Activated CD8-positive, alpha-beta T cell treated with anti-CD3 and anti-CD28 coated beads for 36 hours (primary cell): ENCODE measurements at regions of chr17 and their contacts with region 1.

Region 1: DNA sequence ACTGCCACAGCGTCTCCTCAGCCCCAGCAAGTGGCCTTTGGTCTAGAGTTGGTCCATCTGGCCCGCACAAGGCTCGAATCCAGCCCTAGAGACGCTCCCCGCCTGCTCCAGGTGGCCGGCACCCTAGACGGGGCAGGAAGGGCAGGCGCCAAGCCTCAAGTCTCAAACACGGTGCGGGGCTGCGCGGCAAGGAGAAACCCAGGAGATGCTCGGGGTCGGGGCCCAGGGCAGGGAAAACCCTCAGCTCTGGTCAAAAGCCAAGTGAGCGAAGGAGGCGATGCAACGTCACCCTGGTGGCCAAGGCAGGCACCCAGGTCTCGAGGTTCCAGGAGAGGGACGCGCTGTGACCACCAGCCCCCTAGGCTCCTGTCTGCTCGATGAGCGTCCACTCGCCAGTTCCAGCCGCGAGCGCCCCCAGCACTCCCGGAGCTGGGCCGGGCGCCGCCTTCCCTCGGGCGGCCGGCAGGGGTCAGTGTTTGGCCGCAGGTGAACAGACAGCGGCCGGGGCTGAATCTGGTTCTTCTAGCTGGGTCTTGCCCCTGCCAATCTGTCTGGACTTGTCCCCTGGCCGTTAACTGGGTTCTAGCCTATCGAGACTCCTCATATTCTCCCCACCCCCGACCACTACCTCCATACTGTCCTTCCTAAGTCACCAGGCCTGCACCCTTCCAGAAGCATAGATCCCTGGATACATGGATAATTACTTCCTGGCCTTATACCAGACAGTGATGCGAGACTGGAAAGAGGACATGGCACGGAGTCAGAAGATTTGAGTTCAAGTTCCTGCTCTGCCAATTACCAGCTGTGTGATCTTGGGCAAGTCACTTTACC is 44.0 kb downstream of the PRAC1 start:
- DNase-seq: peak; percentile 79
- ATAC-seq: peak; percentile 97
- H3K4me3 Mint-ChIP-seq: no peak overlapping the region
- H3K27ac Mint-ChIP-seq: no peak overlapping the region
- H3K4me1 Mint-ChIP-seq: peaks cover 2% of the 10 kb centered on the region
- H3K27me3 Mint-ChIP-seq: peaks cover 17% of the 10 kb centered on the region
- CTCF ChIP-seq: peak; percentile 92

Region 2: DNA sequence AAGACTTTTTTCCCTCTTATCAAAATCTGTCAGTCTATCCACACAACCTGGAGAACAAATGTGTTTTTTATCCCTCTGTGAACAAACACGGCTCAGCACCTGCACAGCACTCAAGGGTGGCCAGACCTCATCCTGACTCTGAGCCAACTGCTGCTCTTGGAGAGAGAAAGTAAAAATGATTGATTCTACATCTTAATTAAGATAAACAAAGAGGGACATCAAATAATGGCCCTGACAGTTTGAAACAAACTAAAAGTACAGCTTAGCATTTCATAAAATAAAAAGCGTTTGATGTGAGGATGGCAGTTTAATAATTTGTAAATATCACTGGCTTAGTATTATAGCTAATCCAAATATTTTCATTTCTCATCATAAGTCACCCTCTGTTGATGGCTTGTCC is 464.6 kb before region 1 on chr17:
- CTCF ChIA-PET with region 1: no interaction called
- POLR2A ChIA-PET with region 1: no interaction called
- intact Hi-C with region 1: no loop called
- DNase-seq: no peak
- ATAC-seq: no peak
- H3K4me3 Mint-ChIP-seq: no peak overlapping the region
- H3K27ac Mint-ChIP-seq: peak overlapping the region; percentile 31
- H3K4me1 Mint-ChIP-seq: peaks cover 8% of the 10 kb centered on the region
- H3K27me3 Mint-ChIP-seq: no peaks in the 10 kb centered on the region
- CTCF ChIP-seq: no peak

Region 3: DNA sequence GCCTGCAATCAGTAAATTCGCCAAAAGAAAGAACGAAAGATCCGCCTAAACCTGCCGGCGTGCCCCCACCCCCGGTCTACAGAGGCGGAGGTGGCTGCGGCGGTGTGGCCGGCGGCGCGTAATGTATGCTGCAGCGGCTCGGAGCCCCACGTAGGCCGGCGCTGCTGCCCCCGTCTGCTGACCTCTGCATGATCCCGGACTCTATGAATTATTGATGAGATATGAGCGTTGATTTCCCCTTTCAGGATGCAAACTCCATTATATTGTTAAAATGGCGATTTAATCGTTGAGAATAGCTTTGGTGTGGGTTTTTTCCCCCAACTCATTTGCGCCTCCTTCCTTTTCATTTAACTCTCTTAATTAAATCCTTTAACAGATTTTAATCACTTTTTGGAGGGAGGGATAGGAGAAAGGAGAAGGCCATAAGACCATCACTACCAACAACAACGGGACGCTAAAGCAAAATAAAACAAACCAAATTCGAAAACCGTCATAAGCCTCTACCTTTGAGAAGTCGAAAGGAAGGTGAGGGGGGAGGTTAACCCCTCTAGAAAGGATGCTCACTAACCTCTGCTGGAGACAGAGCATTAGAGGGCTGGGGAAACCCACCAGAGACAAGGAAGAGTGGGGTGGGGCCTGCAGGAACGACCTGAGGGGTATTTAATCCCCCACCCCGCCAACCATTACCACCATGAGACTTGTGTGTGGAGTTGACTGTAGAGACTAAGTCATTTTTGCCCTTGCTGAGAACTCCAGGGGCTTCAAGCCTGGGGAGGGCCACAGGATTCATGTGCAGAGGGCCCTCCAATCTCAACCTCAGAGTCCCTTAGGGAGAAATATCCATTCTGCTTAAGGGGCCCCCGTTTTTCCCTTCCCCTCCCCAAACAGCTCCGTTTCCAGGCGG is 91.7 kb before region 1 on chr17:
- CTCF ChIA-PET with region 1: no interaction called
- POLR2A ChIA-PET with region 1: no interaction called
- intact Hi-C with region 1: no loop called
- DNase-seq: peak; percentile 73
- ATAC-seq: peak; percentile 32
- H3K4me3 Mint-ChIP-seq: peak overlapping the region; percentile 89
- H3K27ac Mint-ChIP-seq: no peak overlapping the region
- H3K4me1 Mint-ChIP-seq: peaks cover 27% of the 10 kb centered on the region
- H3K27me3 Mint-ChIP-seq: peaks cover 89% of the 10 kb centered on the region
- CTCF ChIP-seq: no peak

Region 4: GRCh38 chr17:48690655-48691054 is 12.3 kb after region 1 on chr17:
- CTCF ChIA-PET with region 1: interaction called, 25 read pairs
- POLR2A ChIA-PET with region 1: interaction called, 3 read pairs
- intact Hi-C with region 1: no loop called
- DNase-seq: no peak
- ATAC-seq: no peak
- H3K4me3 Mint-ChIP-seq: no peak overlapping the region
- H3K27ac Mint-ChIP-seq: no peak overlapping the region
- H3K4me1 Mint-ChIP-seq: no peaks in the 10 kb centered on the region
- H3K27me3 Mint-ChIP-seq: peaks cover 7% of the 10 kb centered on the region
- CTCF ChIP-seq: no peak

Region 5: GRCh38 chr17:48724251-48725003 is 46.1 kb after region 1 on chr17:
- CTCF ChIA-PET with region 1: interaction called, 44 read pairs
- POLR2A ChIA-PET with region 1: no interaction called
- intact Hi-C with region 1: no loop called
- DNase-seq: peak; percentile 91
- ATAC-seq: peak; percentile 70
- H3K4me3 Mint-ChIP-seq: peak overlapping the region; percentile 40
- H3K27ac Mint-ChIP-seq: no peak overlapping the region
- H3K4me1 Mint-ChIP-seq: peaks cover 29% of the 10 kb centered on the region
- H3K27me3 Mint-ChIP-seq: peaks cover 88% of the 10 kb centered on the region
- CTCF ChIP-seq: peak; percentile 80

Region 6: DNA sequence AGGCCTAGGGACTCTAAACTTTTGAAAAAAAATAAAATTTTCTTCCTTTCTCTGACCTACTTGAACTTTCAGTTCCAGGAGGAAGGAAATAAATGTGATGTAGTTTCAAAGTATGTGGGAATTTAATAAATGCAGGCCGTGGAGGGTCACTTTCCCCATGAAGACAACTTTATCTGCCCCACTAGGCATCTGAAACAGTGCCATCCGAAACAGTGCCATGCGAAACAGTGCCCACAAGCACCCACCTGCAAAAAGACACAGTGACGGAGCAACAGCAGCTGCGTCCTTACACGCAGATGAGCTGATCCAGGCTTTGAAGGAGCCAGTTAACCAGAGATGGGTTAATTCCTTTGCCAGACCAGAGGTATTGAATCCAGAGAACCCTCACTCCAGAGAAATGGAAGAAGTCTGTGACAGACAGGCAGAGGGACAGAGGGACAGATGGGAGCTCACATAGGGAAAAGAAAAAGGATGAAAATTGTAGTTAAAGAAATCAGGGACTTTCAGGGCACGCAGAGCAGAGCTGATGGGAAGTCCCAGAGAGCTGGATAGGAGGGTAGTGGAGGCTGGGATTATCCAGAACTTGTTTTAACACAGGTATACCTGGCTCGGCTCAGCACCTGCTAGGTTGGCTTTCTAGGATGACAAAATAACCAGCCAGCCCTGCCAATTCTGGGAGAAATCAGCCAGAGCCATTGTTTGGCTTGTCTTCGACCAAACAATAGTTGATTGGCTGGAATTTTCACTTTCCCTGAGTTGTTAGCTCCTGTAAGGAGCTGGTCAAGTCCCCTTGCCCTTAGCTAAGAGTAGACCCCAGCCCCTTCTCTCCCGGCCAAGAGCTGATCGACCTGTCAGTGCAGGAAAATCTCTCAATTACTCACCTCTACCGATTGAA is 67.3 kb after region 1 on chr17:
- CTCF ChIA-PET with region 1: interaction called, 12 read pairs
- POLR2A ChIA-PET with region 1: no interaction called
- intact Hi-C with region 1: no loop called
- DNase-seq: no peak
- ATAC-seq: no peak
- H3K4me3 Mint-ChIP-seq: no peak overlapping the region
- H3K27ac Mint-ChIP-seq: no peak overlapping the region
- H3K4me1 Mint-ChIP-seq: no peaks in the 10 kb centered on the region
- H3K27me3 Mint-ChIP-seq: peaks cover 80% of the 10 kb centered on the region
- CTCF ChIP-seq: no peak

Region 7: DNA sequence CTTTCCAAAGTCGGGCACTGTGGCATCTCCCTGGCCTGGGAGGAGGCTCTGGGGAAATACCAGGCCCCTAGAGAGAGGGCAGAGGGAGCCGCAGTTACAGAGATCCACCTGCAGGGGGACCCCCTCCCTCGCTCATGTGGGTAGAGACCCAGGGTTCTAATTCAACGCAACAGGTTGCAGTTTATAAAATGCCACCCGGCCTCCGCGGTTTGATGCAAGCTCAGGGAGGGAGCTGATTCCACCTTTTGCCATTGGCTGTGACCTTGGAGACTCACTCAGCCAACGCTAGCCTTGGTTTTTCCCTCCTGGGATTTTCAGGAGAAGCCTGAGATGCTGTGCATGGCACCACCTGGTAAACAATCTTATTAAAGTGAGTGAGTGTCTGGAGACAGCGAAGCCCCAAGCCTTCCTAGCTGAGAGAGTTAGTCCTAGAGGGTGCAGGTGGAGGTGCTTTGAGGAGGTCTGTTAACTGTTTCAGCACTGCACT is 126.6 kb after region 1 on chr17:
- CTCF ChIA-PET with region 1: interaction called, 38 read pairs
- POLR2A ChIA-PET with region 1: no interaction called
- intact Hi-C with region 1: no loop called
- DNase-seq: peak; percentile 75
- ATAC-seq: peak; percentile 100
- H3K4me3 Mint-ChIP-seq: no peak overlapping the region
- H3K27ac Mint-ChIP-seq: no peak overlapping the region
- H3K4me1 Mint-ChIP-seq: no peaks in the 10 kb centered on the region
- H3K27me3 Mint-ChIP-seq: peaks cover 6% of the 10 kb centered on the region
- CTCF ChIP-seq: peak; percentile 98

Region 8: GRCh38 chr17:48878918-48879898 is 200.9 kb after region 1 on chr17:
- CTCF ChIA-PET with region 1: interaction called, 66 read pairs
- POLR2A ChIA-PET with region 1: no interaction called
- intact Hi-C with region 1: loop called (anchors 2 kb)
- DNase-seq: peak; percentile 69
- ATAC-seq: peak; percentile 98
- H3K4me3 Mint-ChIP-seq: no peak overlapping the region
- H3K27ac Mint-ChIP-seq: no peak overlapping the region
- H3K4me1 Mint-ChIP-seq: no peaks in the 10 kb centered on the region
- H3K27me3 Mint-ChIP-seq: peaks cover 3% of the 10 kb centered on the region
- CTCF ChIP-seq: peak; percentile 94